ENCODE measurements at regions of chr14 and their contacts with region 1.

Region 1: GRCh38 chr14:52338051-52338681 is 24.1 kb downstream of the PTGER2 start:
- H3K4me3 Mint-ChIP-seq: no peak overlapping the region
- H3K27ac Mint-ChIP-seq: no peak overlapping the region
- H3K4me1 Mint-ChIP-seq: peaks cover 32% of the 10 kb centered on the region
- H3K27me3 Mint-ChIP-seq: peaks cover 30% of the 10 kb centered on the region

Region 2: GRCh38 chr14:52351233-52352060 is 13.3 kb after region 1 on chr14:
- intact Hi-C with region 1: loop called (anchors 2 kb)
- H3K4me3 Mint-ChIP-seq: no peak overlapping the region
- H3K27ac Mint-ChIP-seq: no peak overlapping the region
- H3K4me1 Mint-ChIP-seq: peaks cover 22% of the 10 kb centered on the region
- H3K27me3 Mint-ChIP-seq: peaks cover 83% of the 10 kb centered on the region

Region 3: DNA sequence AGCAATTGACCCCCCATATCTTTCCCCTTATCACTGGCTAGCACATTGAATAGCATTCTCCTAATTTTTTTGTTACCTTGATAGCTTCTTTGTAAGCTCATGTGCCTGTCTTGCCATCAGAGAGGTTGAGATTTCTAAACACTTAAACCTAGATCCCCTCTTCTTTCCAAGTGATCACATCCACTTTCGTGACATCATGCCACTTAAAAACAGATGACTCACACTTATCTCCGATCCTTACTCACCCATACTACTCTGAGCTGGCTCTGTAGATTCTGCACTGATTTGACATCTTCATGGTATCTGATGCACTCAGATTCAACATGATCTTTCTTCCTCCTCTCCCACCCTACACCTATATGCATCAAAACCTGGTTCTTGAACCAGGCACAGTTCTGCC is 225.0 kb after region 1 on chr14:
- intact Hi-C with region 1: no loop called
- H3K4me3 Mint-ChIP-seq: no peak overlapping the region
- H3K27ac Mint-ChIP-seq: no peak overlapping the region
- H3K4me1 Mint-ChIP-seq: no peaks in the 10 kb centered on the region
- H3K27me3 Mint-ChIP-seq: peaks cover 1% of the 10 kb centered on the region